ENCODE measurements at regions of chr4 and their contacts with region 1.

Region 1: GRCh38 chr4:86497980-86498862 is 95.9 kb upstream of the PTPN13 start:
- DNase-seq: no peak
- ATAC-seq: peak; percentile 68 to 89 (median 88)
- H3K4me3 ChIP-seq: no peak overlapping the region
- H3K27ac ChIP-seq: peak overlapping the region in 1 of 4 donors; percentile 27
- H3K4me1 ChIP-seq: no peaks in the 10 kb centered on the region
- H3K27me3 ChIP-seq: no peaks in the 10 kb centered on the region
- CTCF ChIP-seq: peak; percentile 54 to 77 (median 72)

Region 2: DNA sequence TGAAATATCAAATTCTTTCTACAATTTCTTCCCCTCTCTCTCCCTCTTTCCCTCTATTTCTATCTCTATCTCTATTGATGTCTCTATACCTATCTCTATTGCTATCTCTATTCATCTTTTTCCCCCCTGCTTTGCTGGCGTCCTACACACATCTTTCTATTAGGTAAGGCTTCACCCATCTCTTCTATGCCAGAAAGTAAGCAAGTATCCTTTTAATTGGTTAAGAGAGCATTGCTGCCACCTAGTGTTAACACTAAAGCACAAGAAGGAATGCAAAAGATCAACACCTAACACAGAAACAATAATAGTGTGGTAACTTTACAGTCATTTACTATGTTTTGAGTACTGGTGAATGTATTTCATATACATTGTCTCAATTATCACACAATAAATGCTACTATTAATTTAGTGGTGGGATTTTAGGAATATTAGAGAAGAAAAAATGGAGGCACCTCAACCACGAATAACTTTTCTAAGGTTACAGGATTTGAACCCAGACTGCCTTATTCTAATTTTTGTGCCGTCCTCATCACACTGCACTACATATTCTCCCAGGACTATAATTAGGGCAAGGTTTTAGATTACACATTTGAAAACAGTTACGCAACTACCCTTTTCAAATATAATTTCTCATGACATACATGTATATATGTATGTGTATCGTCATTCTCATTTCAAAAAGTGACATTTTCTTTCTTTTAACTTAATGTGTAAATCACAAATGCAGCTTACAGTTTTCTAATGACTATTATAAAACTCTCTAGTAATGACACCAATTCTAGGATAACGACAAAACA is 397.7 kb after region 1 on chr4:
- intact Hi-C with region 1: loop called in 2 of 3 experiments (anchors 5 to 10 kb)
- DNase-seq: no peak
- ATAC-seq: peak in 3 of 4 donors; percentile 43 to 52 (median 44)
- H3K4me3 ChIP-seq: no peak overlapping the region
- H3K27ac ChIP-seq: no peak overlapping the region
- H3K4me1 ChIP-seq: peaks cover 0 to 6% (median 0%) of the 10 kb centered on the region in 3 donors
- H3K27me3 ChIP-seq: no peaks in the 10 kb centered on the region
- CTCF ChIP-seq: peak in 3 of 4 donors; percentile 28 to 62 (median 57)

Measured in pancreas (tissue), 10 donors.